ENCODE measurements at regions of chr4 and their contacts with region 1.

Region 1: DNA sequence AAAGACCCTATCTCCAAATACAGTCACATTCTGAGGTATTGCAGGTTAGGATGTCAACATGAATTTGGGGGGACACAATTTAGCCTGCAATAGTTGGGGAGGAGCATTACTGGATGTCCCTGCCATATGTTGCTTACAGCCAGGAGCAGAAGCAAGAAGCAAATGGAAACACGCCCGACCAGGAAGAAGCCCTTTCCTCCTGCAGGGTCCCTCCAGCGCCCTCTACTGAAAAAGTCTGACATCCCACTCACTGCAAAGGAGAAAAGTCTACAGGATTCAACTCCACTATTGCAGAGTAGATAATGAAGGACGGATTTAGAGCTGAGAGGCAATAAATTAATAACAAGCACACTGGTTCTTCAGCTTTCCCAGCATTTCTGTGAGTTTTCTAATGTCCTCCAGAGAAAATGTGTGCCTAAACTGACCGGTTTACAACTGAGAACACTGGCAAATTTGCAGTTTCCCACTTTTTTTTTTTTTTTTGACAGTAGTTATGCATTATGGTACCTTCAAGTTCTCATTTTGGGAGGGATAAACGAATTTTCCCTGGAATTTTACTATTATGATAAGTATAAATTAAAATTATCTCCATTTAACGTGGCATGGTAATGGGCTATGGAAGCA is 31.7 kb downstream of the COQ2 start:
- DNase-seq: peak; percentile 85
- H3K4me3 Mint-ChIP-seq: no peak overlapping the region
- H3K27ac Mint-ChIP-seq: peak overlapping the region; percentile 33
- H3K4me1 Mint-ChIP-seq: peaks cover 49% of the 10 kb centered on the region
- H3K27me3 Mint-ChIP-seq: no peaks in the 10 kb centered on the region

Region 2: GRCh38 chr4:83074086-83074704 is 178.7 kb before region 1 on chr4:
- CTCF ChIA-PET with region 1: interaction called, 12 read pairs
- POLR2A ChIA-PET with region 1: no interaction called
- DNase-seq: peak; percentile 89
- H3K4me3 Mint-ChIP-seq: peak overlapping the region; percentile 46
- H3K27ac Mint-ChIP-seq: peak overlapping the region; percentile 81
- H3K4me1 Mint-ChIP-seq: peaks cover 23% of the 10 kb centered on the region
- H3K27me3 Mint-ChIP-seq: no peaks in the 10 kb centered on the region

Region 3: DNA sequence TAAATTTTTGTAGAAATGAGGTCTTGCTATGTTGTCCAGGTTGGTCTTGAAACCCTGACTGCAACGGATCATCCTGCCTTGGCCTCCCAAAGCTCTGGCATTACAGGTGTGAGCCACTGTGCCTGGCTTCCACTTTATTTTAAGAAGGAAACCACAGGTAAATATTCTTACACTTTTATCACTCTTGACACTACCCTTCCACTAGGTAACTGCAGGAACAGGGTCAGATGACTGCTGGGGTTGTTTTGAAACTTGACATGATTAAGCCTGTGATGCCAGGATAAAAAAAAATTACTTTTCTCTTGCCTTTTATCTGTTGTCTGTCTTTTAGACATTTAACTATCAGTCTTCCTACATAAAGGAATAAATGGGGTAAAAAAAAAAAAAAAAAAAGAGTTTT is 11.8 kb before region 1 on chr4:
- CTCF ChIA-PET with region 1: interaction called, 14 read pairs
- POLR2A ChIA-PET with region 1: no interaction called
- DNase-seq: no peak
- H3K4me3 Mint-ChIP-seq: no peak overlapping the region
- H3K27ac Mint-ChIP-seq: no peak overlapping the region
- H3K4me1 Mint-ChIP-seq: peaks cover 43% of the 10 kb centered on the region
- H3K27me3 Mint-ChIP-seq: peaks cover 38% of the 10 kb centered on the region